ENCODE measurements at regions of chr2 and their contacts with region 1.

Region 1: GRCh38 chr2:100291120-100291970 is 31.0 kb downstream of the LONRF2 start:
- DNase-seq: peak; percentile 90 to 99
- ATAC-seq: peak; percentile 91 to 93
- H3K4me3 ChIP-seq: peak overlapping the region; percentile 22
- H3K27ac ChIP-seq: peak overlapping the region; percentile 98 to 99
- H3K4me1 ChIP-seq: peaks cover 47% of the 10 kb centered on the region
- CTCF ChIP-seq: no peak
- EP300 ChIP-seq: peak; percentile 86 to 93; a peak in 4 of 5 replicates
- POLR2A ChIP-seq: no peak
- RAD21 ChIP-seq: peak; percentile 18 to 47; a peak in 3 of 5 replicates

Region 2: DNA sequence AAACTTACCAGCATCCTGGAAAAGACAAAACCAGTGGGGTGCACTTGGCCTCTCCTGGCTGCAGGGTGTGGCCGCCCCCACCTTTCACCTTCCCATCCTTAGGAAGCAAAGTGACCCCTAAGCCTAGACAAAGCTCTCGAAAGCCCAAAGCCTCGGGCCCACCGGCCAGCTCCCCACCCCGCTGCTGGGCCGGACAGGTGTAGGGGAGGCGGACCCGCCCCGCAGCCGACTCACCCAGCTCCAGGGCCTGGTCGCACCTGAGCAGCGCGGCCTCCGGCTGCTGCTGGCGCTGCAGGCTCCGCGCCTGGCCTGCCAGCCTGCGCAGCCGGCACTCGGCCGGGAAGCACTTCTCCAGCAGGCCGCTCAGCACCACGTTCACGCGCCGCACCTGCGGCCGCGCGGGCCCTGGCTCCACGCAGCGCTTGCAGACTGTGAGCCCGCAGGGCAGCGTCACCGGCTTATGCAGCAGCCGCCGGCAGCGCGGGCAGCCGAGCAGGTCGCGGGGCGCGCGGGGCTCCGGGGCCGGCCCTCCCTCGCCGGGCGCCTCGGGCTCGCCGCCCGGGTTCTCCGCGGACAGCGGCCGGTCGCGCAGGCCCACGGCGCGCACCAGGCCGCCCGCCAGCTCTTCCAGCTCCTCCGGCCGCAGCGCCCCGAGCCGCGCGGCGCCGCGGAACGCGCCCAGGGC is 30.0 kb after region 1 on chr2:
- CTCF ChIA-PET with region 1: interaction called, 41 read pairs
- POLR2A ChIA-PET with region 1: interaction called, 49 read pairs
- DNase-seq: peak; percentile 40 to 77
- ATAC-seq: peak; percentile 81 to 86
- H3K4me3 ChIP-seq: peak overlapping the region; percentile 88
- H3K27ac ChIP-seq: peak overlapping the region; percentile 92 to 94
- H3K4me1 ChIP-seq: peaks cover 14% of the 10 kb centered on the region; the same call in 1 of the 3 replicates
- CTCF ChIP-seq: peak; percentile 26; the same call in 1 of the 3 replicates
- EP300 ChIP-seq: no peak
- POLR2A ChIP-seq: peak; percentile 66
- RAD21 ChIP-seq: no peak

Region 3: DNA sequence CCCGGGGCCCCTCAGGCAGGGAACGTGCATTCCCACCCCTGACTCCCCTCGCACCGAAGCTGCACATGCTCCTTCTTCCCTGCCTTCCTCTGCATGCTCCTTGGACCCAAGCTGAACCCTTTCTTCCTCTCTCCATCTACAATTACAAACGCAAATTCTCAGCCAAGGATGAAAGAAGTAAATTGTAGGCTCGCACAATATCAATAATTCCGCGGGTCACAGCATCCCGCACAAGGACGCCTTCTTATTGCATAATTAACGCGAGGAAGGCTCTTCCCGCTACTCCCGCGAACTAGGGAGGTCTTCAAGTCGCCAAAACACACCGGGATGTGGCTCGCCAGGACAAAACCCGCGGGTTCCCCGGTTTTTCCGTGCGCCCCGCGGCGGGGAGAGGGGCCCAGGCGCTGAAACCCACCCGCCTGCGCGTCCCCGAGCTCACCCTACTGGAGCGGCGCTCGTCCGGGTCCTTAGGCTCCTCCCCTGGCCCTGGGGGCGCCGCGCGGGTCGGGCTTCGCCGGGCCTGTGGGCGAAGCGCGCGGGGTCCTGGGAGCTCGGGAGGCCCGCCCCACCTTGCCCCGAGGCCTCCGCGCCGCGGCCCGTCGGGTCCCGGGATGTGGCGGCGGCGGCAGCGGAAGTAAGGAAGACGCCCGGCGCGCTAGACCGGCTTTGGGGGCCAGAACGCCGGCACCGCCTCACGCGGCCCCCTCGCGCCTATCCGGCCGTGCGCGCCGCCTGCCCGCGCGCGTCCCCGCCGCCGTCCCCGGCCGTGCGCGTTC is 125.8 kb after region 1 on chr2 and contains the start of gene CHST10:
- CTCF ChIA-PET with region 1: interaction called, 3 read pairs
- POLR2A ChIA-PET with region 1: interaction called, 12 read pairs
- DNase-seq: peak; percentile 59 to 63
- ATAC-seq: peak; percentile 95 to 98
- H3K4me3 ChIP-seq: peak within 1 kb of the TSS; percentile 79
- H3K27ac ChIP-seq: peak within 1 kb of the TSS; percentile 86 to 97
- H3K4me1 ChIP-seq: peaks cover 8% of the 10 kb centered on the region; the same call in 1 of the 3 replicates
- CTCF ChIP-seq: no peak
- EP300 ChIP-seq: no peak
- POLR2A ChIP-seq: peak; percentile 71
- RAD21 ChIP-seq: no peak; a peak in 1 of 5 replicates
- polyA plus RNA-seq, gene CHST10: 24.0 and 29.5 TPM in 2 replicates